Activated naive CD4-positive, alpha-beta T cell treated with anti-CD3 and anti-CD28 coated beads for 36 hours (primary cell): ENCODE measurements at regions of chr14 and their contacts with region 1.

Region 1: GRCh38 chr14:23327947-23328744 is 6.9 kb downstream of the PABPN1 start:
- DNase-seq: peak; percentile 85
- H3K4me3 Mint-ChIP-seq: no peak overlapping the region
- H3K27ac Mint-ChIP-seq: no peak overlapping the region
- H3K4me1 Mint-ChIP-seq: peaks cover 6% of the 10 kb centered on the region
- H3K27me3 Mint-ChIP-seq: no peaks in the 10 kb centered on the region

Region 2: GRCh38 chr14:22556990-22557623 is 771.0 kb before region 1 on chr14:
- CTCF ChIA-PET with region 1: no interaction called
- intact Hi-C with region 1: no loop called
- DNase-seq: peak; percentile 95
- H3K4me3 Mint-ChIP-seq: peak overlapping the region; percentile 74
- H3K27ac Mint-ChIP-seq: peak overlapping the region; percentile 97
- H3K4me1 Mint-ChIP-seq: peaks cover 84% of the 10 kb centered on the region
- H3K27me3 Mint-ChIP-seq: no peaks in the 10 kb centered on the region

Region 3: GRCh38 chr14:23006544-23007419 is 321.4 kb before region 1 on chr14:
- CTCF ChIA-PET with region 1: no interaction called
- intact Hi-C with region 1: no loop called
- DNase-seq: peak; percentile 99
- H3K4me3 Mint-ChIP-seq: peak overlapping the region; percentile 96
- H3K27ac Mint-ChIP-seq: peak overlapping the region; percentile 98
- H3K4me1 Mint-ChIP-seq: peaks cover 36% of the 10 kb centered on the region
- H3K27me3 Mint-ChIP-seq: no peaks in the 10 kb centered on the region

Region 4: DNA sequence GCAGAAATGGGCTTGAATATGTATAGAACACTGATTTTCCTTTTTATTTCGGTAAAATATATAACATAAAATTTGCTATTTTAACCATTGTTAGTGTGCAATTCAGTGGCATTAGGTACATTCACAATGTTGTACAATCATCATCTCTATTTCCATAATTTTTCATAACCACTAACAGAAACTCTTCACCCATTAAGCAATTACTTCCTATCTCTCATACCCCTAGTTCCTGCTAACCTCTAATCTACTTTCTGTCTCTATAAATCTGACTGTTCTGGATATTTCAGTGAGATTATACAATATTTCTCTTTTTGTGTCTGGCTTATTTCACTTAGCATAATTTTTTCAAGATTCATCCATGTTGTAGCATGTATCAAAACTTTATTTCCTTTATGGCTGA is 99.3 kb before region 1 on chr14:
- CTCF ChIA-PET with region 1: no interaction called
- intact Hi-C with region 1: no loop called
- DNase-seq: no peak
- H3K4me3 Mint-ChIP-seq: no peak overlapping the region
- H3K27ac Mint-ChIP-seq: no peak overlapping the region
- H3K4me1 Mint-ChIP-seq: no peaks in the 10 kb centered on the region
- H3K27me3 Mint-ChIP-seq: no peaks in the 10 kb centered on the region

Region 5: GRCh38 chr14:23269193-23269592 is 59.0 kb before region 1 on chr14:
- CTCF ChIA-PET with region 1: interaction called, 5 read pairs
- intact Hi-C with region 1: loop called (anchors 1 kb)
- DNase-seq: no peak
- H3K4me3 Mint-ChIP-seq: no peak overlapping the region
- H3K27ac Mint-ChIP-seq: no peak overlapping the region
- H3K4me1 Mint-ChIP-seq: no peaks in the 10 kb centered on the region
- H3K27me3 Mint-ChIP-seq: no peaks in the 10 kb centered on the region

Region 6: DNA sequence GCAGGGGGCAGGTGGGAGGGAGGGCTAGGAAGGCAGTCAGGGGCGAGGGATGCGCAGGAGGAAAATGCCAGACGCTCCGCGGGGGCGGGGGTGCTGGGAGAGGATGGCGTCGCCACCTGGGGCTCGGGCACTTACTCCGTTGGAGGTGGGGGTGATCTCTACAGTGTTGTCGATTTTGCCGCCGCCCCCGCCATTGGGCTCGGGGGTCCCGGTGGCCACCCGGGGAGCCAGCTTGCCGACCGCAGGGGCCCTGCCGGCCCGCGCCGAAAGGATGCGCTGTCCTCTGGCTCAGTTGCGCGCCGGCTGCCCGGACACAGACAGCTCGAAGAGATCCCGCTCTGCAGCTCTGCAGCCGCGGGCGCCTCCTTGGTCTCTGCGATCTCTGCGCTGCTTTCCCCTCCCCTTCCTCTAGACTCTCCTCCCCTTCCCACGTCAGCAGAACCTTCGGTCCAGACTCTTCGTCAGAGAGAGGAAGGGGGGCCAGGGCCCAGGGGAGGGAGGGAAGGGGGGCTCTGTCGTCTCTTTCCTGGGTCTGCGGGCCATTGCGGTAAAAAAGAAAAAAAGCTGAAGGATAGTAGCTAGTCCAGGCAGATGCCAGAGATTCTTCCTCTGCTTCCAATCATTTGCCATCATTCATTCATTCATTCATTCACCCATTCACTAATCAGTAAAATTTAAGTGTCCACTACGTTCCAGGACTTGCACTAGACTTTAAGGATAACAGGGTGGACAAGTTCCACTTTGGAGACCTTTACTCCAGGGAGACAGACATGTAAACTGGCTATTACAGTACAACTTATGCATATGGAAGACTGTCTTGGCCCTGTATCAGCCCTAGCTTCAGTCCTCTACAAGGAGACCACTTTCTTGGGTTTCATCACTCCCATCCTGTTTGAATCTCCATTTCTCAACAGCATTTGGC is 24.6 kb after region 1 on chr14 and contains the start of gene SLC22A17:
- CTCF ChIA-PET with region 1: interaction called, 4 read pairs
- intact Hi-C with region 1: loop called (anchors 2 kb)
- DNase-seq: peak; percentile 72
- H3K4me3 Mint-ChIP-seq: peak within 1 kb of the TSS; percentile 71
- H3K27ac Mint-ChIP-seq: no peak within 1 kb of the TSS
- H3K4me1 Mint-ChIP-seq: peaks cover 6% of the 10 kb centered on the region
- H3K27me3 Mint-ChIP-seq: peaks cover 4% of the 10 kb centered on the region
- total RNA-seq, gene SLC22A17: 3.5 to 4.8 TPM

Region 7: DNA sequence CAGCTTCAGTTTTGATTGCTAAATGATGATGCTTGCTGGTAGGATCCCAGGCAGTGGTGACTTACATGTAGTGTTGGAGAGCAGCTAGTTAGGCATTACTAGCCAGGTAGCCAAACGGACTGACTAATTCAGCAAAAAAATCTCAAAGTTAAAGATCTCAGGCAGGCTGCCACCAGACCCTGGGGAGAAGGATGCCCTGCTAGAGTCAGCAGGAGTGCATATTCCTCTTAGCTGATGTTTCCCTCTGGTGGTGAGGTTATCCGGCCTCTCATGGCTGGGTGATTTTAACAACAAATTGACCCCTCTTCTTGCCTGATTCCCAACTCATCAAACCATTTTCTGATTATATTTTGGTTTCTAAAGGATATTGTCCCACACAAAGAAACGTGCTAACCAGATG is 34.1 kb after region 1 on chr14:
- CTCF ChIA-PET with region 1: interaction called, 21 read pairs
- intact Hi-C with region 1: no loop called
- DNase-seq: no peak
- H3K4me3 Mint-ChIP-seq: no peak overlapping the region
- H3K27ac Mint-ChIP-seq: no peak overlapping the region
- H3K4me1 Mint-ChIP-seq: peaks cover 6% of the 10 kb centered on the region
- H3K27me3 Mint-ChIP-seq: peaks cover 19% of the 10 kb centered on the region

Region 8: DNA sequence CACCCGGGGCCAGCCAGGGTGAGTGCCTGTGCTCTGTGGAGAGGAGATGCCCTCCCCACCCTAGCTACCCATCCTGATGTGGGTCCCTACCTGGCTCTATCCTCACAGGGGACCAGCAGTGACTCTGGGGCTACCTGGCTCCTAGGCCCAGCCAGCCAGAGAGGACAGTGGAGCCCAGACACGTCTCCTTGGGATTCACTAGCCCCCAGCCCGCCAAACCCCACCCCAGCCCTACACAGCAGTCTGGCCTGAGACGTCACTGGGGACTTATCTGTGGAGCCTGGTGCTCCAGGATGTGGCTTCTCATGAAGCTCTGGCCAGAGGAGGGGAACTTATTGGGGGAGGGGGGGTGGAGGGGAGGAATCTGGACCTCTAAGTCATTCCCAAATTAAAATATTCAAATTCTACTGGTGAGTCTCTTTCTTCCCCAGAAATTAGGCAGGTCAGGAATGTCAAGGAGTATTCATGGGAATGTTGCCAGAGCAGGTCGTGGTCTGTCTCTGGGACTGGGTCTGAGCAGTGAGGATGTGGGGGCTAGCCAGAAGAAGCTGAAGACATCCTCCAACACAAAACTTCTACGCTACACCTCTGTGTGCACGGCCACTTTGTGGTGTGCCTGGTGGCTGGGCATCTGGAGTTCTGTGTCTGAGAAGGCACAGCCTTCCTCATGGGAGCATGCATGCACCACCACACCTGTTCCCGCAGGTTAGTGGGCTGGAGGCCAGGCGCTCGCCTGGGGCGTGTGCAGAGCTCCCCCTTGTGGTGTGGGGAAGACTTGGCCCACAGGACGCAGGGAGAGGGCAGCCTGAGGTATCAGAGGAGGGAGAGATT is 51.4 kb after region 1 on chr14:
- CTCF ChIA-PET with region 1: interaction called, 76 read pairs
- intact Hi-C with region 1: loop called (anchors 1 kb)
- DNase-seq: peak; percentile 66
- H3K4me3 Mint-ChIP-seq: no peak overlapping the region
- H3K27ac Mint-ChIP-seq: no peak overlapping the region
- H3K4me1 Mint-ChIP-seq: no peaks in the 10 kb centered on the region
- H3K27me3 Mint-ChIP-seq: no peaks in the 10 kb centered on the region

Region 9: GRCh38 chr14:23469127-23469905 is 141.2 kb after region 1 on chr14 and contains the start of gene NGDN:
- CTCF ChIA-PET with region 1: interaction called, 3 read pairs
- intact Hi-C with region 1: loop called (anchors 2 kb)
- DNase-seq: peak; percentile 96
- H3K4me3 Mint-ChIP-seq: no peak within 1 kb of the TSS
- H3K27ac Mint-ChIP-seq: no peak within 1 kb of the TSS
- H3K4me1 Mint-ChIP-seq: peaks cover 11% of the 10 kb centered on the region
- H3K27me3 Mint-ChIP-seq: no peaks in the 10 kb centered on the region
- total RNA-seq, gene NGDN: 38.9 to 40.8 TPM

Region 10: DNA sequence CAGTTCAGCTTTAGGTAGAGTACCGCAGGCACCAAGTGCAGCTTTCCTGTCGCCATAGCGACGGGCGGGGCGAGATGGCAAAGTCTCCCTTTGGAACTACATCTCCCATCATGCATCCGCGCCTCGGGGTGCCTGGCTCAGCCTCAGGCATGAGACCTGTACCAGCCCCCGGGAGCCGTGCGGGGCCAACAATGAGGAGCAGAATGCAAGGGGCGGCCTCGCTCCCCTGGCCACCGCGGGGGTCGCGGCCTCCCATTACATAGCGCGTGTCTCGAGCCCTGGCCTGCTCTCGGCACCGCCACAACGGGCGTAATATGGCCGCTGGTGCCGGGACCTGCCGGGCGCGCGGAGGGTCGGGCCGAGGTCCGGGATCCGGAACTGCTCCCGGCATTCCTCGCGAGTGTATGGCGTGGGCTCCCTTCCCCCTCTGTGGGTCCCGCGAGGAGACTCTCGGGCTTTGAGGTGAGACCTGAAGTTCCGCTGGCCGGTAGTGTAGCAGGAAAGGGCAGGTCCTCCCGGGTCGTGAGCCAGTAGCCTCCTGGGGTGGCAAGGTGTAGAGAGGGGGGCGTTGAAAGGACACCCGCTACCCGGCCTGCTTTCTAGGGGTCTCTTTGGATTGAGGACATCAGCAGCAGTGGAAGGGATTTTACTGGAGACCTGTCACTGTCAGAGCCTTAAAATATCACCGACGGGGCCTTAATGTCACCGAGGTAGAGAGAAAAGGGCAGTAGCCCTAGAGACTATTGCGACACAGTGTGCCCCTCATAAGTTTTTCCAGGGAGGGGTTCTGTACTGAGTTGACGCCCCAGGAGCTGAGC is 227.9 kb after region 1 on chr14 and contains the start of gene THTPA:
- CTCF ChIA-PET with region 1: interaction called, 22 read pairs
- intact Hi-C with region 1: loop called (anchors 1 kb)
- DNase-seq: peak; percentile 96
- H3K4me3 Mint-ChIP-seq: peak within 1 kb of the TSS; percentile 95
- H3K27ac Mint-ChIP-seq: peak within 1 kb of the TSS; percentile 94
- H3K4me1 Mint-ChIP-seq: peaks cover 38% of the 10 kb centered on the region
- H3K27me3 Mint-ChIP-seq: no peaks in the 10 kb centered on the region
- total RNA-seq, gene THTPA: 6.2 to 6.6 TPM